Left ventricle myocardium superior (tissue), 1 donor: ENCODE measurements at regions of chr5 and their contacts with region 1.

Region 1: DNA sequence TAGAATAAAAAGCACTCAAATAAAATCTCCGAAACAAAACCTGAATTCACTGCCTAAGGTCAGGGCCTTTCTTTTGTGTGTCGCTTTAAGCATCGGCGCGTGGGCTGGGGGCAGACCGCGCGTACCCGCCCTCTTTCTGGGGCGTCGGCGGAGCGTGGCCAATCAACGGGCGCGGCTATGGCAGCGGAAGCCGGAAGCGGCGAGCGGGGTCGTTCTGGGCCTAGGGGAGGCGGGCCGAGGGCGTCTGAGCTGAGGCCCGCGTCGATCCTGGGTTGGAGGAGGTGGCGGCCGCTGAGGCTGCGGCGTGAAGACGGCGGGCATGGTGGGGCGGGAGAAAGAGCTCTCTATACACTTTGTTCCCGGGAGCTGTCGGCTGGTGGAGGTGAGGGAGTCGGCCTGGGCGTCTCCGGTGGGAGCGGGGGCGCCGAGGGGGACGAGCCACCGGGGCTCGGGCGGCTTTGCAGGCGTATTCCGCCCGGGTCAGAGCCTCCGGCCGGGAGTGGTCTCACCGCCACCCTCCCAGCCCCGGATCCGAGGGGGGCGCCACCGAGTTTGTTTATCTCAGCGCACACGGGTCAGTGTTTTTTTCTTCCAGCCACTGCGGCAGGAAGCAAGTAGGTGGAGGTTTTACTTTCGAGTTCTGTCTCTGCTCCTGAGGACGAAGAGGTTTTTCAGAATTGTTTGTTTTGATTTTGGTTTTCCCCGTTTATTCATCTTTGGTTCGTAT is at the start of gene MAT2B:
- DNase-seq: peak; percentile 98
- ATAC-seq: peak; percentile 97
- total RNA-seq, gene MAT2B: 62.5 TPM

Region 2: DNA sequence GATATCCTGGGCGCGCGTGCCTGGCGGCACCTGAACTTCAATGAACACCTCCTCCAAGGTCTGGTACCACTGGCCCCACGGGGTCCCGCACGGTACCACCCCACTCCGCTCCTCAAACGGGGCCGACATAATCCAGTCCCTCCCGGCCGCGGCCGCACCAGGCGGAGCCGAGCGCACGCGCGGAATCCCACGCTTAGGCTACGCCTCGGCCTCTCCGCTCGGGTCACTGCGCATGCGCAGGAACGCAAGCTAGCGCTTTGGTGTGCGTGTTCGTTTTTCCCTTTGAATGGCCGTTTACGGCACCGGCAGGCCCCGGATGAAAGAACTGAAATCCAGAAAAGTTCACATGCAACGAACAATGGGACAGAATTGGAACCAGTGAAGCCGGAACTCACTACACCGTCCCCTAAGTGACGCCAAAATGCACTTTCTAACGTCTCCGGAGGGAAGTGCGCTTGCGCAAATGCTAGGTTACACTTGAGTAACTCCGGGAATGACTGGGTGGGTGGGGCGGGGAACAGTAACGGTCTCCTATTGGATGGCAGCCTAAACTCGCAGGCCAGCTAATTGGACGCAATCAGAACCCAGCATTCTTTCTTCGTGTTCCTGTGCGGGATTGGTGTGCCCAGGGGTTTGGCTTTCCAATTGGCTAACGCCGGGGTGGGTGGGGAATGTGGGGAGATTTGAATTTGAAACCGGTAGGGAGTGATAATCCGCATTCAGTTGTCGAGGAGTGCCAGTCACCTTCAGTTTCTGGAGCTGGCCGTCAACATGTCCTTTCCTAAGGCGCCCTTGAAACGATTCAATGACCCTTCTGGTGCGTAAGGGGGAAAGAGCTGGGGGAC is 45.4 kb before region 1 on chr5 and contains the starts of genes HMMR and NUDCD2:
- intact Hi-C with region 1: loop called (anchors 2 kb)
- DNase-seq: peak; percentile 99
- ATAC-seq: peak; percentile 95
- total RNA-seq, gene HMMR: 0.72 TPM
- total RNA-seq, gene NUDCD2: 13.9 TPM

Region 3: DNA sequence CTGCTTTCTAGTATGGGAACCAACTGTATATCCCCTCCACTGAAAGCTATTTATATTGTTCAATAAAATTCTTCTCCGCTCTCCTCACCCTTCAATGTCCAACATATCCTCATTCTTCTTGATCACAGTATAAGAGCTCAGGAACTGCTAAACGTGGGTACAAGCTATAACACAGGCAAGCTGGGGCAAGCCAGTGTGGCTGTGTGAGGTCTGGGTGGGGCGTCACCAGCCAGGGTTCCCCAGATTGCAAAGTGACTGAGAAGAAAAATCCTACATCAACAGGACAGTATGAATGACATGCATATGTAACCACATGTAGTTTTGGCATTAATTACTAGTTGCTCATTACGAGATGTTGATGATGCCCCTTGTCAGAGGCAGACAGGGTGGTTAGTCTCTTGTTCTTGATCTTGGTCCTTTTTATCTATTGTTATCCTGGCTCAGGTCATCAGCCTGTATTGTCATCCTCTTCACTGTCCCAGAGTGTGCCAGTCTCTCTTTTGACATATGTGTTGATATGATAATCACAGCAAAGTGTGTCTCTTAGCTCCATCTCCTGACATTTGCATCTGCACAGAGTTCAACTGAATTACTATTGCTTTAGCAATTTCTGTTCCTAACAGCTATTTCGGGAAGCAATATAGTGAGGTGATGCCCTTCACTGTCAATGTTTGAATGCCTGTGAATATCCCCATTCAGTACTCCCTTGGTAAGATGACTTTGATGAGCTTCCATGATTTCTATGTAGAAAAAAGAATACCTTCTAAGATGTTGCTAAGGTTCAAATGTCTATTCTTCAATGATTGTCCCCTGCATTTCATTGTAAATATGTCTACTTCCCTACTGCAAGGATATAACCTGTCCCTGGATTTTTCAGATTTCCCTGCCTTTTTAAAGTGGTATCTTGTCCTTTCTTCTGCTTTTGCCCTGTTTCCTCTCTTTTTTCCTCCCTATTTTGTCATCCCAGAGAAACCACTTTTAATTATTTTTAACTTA is 140.2 kb after region 1 on chr5:
- intact Hi-C with region 1: no loop called
- DNase-seq: no peak
- ATAC-seq: no peak